ENCODE measurements at regions of chr11 and their contacts with region 1.

Region 1: GRCh38 chr11:32312865-32313403 is 122.4 kb downstream of the WT1 start:
- DNase-seq: peak; percentile 18
- H3K4me3 Mint-ChIP-seq: no peak overlapping the region
- H3K27ac Mint-ChIP-seq: no peak overlapping the region
- H3K4me1 Mint-ChIP-seq: peaks cover 7% of the 10 kb centered on the region
- H3K27me3 Mint-ChIP-seq: peaks cover 15% of the 10 kb centered on the region

Region 2: DNA sequence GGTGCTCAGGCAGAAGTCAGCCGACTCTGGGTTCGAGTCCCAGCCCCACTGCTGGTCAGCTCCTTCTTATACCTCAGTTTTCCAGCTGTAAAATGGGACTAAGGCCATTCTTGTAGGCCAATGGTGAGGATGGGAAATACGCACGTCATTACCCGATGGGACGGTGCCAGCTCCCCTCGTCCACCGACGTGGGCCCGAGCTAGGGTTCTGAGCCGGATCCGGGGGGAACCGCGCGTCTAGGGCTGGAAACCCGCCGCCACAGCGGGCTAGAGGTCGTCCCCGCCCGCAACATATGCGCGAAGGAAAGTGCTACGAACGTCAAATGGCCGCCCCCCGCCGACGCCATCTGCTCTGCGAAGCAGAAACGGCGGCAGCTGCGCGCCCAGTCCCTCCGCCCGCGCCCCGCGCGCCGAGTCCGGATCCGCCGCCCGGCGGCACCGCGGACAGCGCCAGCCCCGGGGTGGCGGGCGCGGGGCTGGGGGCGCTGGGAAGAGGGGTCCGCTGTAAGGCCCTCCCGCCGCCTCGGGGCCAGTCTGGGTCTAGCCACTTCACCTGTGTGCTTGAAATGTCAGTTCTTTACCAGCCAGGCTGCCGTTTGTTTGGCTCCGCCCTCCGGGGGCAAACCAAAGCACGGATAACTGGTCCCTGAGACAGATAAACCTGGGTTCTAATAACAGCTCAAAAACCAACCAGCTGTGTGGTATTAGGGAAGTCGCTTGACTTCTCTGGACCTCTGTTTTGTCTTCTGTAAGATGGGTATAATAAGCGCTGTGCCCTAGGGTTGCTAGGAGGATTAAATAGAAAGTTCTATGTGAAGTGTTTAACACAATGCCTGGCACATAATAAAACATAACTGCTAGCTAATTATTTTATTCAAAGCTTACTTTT is 325.6 kb before region 1 on chr11:
- CTCF ChIA-PET with region 1: no interaction called
- POLR2A ChIA-PET with region 1: no interaction called
- DNase-seq: no peak
- H3K4me3 Mint-ChIP-seq: no peak overlapping the region
- H3K27ac Mint-ChIP-seq: no peak overlapping the region
- H3K4me1 Mint-ChIP-seq: no peaks in the 10 kb centered on the region
- H3K27me3 Mint-ChIP-seq: peaks cover 28% of the 10 kb centered on the region

Region 3: DNA sequence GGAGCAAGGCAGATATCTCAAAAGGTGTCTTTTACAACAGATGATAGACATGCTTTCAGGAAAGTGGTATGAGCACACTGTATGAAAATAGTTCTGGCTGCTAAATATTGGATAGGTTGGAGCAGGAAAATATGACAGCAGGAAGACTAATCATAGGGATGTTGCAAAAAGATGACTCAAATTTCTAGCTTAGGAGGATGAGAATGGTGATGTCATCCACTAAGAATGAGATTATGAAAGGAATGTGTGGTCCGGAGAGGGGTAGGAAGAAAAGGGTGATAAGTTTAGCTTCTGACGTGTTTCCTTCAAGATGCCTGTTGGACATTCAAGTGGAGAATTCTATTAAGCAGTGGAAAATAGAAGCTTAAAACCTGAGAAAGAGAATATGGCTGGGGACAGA is 175.7 kb before region 1 on chr11:
- CTCF ChIA-PET with region 1: no interaction called
- POLR2A ChIA-PET with region 1: no interaction called
- DNase-seq: no peak
- H3K4me3 Mint-ChIP-seq: no peak overlapping the region
- H3K27ac Mint-ChIP-seq: no peak overlapping the region
- H3K4me1 Mint-ChIP-seq: no peaks in the 10 kb centered on the region
- H3K27me3 Mint-ChIP-seq: peaks cover 5% of the 10 kb centered on the region

Region 4: GRCh38 chr11:32279672-32280071 is 33.3 kb before region 1 on chr11:
- CTCF ChIA-PET with region 1: no interaction called
- POLR2A ChIA-PET with region 1: no interaction called
- DNase-seq: no peak
- H3K4me3 Mint-ChIP-seq: no peak overlapping the region
- H3K27ac Mint-ChIP-seq: no peak overlapping the region
- H3K4me1 Mint-ChIP-seq: no peaks in the 10 kb centered on the region
- H3K27me3 Mint-ChIP-seq: peaks cover 17% of the 10 kb centered on the region

Region 5: GRCh38 chr11:32302821-32303220 is 10.1 kb before region 1 on chr11:
- CTCF ChIA-PET with region 1: interaction called, 10 read pairs
- POLR2A ChIA-PET with region 1: interaction called, 3 read pairs
- DNase-seq: no peak
- H3K4me3 Mint-ChIP-seq: no peak overlapping the region
- H3K27ac Mint-ChIP-seq: no peak overlapping the region
- H3K4me1 Mint-ChIP-seq: no peaks in the 10 kb centered on the region
- H3K27me3 Mint-ChIP-seq: no peaks in the 10 kb centered on the region

Measured in activated CD4-positive, alpha-beta memory T cell treated with anti-CD3 and anti-CD28 coated beads, Interleukin-2, amount 10 ng/mL, durations not matched to agents 7 days and 5 days (primary cell).